Breast epithelium (tissue), 4 donors: ENCODE measurements at regions of chr16 and their contacts with region 1.

Region 1: DNA sequence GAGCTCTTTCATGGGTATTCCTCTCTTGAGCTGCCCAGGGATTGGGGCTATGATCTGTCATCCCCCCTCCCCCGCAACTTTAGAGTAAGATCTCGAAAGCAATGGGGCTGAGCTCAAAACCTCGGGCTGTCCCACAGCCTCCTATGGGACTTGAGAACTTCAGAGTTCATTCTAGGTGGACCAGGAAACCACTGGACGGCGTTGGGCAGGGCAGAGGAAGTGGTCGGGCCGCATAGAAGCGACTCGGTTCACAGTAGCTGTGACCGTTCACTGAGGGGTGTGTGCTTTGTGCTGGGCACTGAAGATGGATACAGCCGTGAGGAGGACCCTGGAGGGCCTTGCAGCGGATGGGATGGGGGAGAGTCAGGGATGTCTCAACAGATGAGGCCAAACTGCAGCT is 292.0 kb downstream of the CPPED1 start:
- DNase-seq: no peak
- H3K4me3 ChIP-seq: no peak overlapping the region
- H3K27ac ChIP-seq: no peak overlapping the region
- H3K4me1 ChIP-seq: no peaks in the 10 kb centered on the region
- H3K27me3 ChIP-seq: no peaks in the 10 kb centered on the region
- CTCF ChIP-seq: no peak
- POLR2A ChIP-seq: no peak

Region 2: DNA sequence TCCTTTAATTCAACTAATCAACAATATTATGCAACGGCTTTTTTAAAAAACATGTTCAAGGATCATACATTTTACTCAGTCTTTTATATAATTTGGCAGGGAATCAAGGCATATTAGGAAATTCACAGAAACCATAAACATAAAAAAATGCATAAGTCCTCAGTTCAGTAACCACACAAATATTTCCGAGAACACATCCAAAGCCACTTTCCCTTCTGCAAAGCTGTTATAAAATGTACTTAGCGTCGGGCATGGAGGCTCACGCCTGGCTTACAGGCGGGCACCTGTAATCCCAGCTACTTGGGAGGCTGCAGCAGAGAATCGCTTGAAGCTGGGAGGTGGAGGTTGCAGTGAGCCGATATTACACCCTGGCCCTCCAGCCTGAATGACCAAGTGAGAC is 705.0 kb before region 1 on chr16:
- intact Hi-C with region 1: no loop called
- DNase-seq: no peak
- H3K4me3 ChIP-seq: no peak overlapping the region
- H3K27ac ChIP-seq: no peak overlapping the region
- H3K4me1 ChIP-seq: no peaks in the 10 kb centered on the region
- H3K27me3 ChIP-seq: no peaks in the 10 kb centered on the region
- CTCF ChIP-seq: no peak
- POLR2A ChIP-seq: no peak

Region 3: DNA sequence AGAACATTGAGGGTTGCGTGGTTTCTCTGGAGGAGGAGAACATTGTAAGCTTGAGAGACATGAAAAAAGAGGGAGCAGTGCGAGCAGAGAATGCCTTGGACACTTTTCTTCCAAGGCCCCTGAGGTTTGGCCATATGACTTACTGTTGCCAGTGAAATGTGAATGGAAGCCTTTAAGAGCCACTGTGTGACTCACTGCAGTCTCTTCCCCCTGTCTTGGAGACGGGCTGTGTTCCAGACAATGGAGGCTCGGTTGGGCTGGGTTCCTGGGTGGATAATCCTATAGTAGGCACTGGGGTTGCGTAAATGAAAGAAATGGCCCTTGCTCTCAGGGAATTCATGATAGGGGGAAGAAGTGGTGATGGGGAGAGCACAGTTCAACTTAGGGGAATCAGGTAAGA is 465.2 kb after region 1 on chr16:
- intact Hi-C with region 1: loop called (anchors 5 kb)
- DNase-seq: no peak
- H3K4me3 ChIP-seq: no peak overlapping the region
- H3K27ac ChIP-seq: no peak overlapping the region
- H3K4me1 ChIP-seq: no peaks in the 10 kb centered on the region
- H3K27me3 ChIP-seq: no peaks in the 10 kb centered on the region
- CTCF ChIP-seq: no peak
- POLR2A ChIP-seq: no peak